H1 (cell line): ENCODE measurements at regions of chr2 and their contacts with region 1.

Region 1: DNA sequence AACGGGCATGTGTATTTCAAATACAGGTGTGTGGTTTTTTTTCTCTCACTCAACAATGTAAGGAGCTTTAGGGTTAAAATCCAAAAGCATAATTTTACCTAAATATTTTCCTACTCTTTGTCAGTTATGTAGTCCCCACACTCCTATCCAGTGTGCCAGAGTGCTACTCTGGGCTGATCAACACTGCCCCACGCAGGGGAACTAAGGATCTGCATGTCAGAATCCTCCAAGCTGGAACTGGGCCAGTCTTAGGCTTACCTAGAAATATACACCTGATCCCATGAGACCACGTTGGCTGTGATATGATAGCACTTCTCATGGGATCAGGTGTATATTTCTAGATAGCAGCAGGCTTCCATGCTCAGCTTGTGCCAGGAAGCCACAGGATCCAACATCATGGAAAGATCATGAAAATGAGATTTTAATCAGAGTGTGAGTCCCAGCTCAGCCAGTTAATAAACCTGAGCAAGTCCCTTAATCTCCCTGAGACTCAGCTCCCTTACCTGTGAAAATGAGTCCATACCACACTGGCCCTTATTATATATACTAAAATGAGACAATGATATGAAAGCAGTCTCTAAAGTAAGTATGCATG is 29.7 kb downstream of the CCDC141 start:
- DNase-seq: peak; percentile 23 to 83
- H3K4me3 ChIP-seq: no peak overlapping the region
- H3K27ac ChIP-seq: no peak overlapping the region
- H3K4me1 ChIP-seq: no peaks in the 10 kb centered on the region
- H3K27me3 ChIP-seq: no peaks in the 10 kb centered on the region
- CTCF ChIP-seq: peak; percentile 71 to 82 (median 80)
- EP300 ChIP-seq: no peak
- POLR2A ChIP-seq: no peak
- RAD21 ChIP-seq: peak; percentile 81 to 85

Region 2: DNA sequence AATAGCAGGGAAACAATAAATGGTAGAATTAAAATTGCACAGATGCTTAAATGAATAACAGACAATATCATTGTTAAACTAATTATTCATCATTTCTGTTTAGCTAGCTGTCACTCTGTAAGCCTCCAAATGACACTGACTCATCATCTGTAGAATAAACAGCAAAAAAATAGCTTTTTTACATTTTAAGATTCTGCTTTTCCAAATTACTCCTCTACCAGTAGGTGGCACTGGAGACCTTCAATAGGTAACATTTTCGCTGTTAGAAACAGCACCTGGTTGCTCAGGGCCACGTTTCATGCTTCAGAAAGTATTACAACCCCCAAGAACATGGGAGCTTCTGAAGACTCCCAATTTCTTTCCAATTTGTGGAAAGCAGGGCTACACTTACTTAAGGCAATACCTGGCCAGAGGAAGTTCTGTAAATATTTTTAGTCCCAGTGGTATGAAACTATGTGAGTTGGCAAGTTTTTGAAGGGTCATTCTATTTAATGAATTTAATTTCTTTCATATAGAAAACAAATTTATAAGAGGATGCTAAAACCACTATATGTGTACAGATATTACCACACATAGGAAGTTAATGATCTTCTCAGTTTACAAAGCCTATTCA is 258.4 kb before region 1 on chr2:
- CTCF ChIA-PET with region 1: interaction called, 11 read pairs
- POLR2A ChIA-PET with region 1: no interaction called
- DNase-seq: peak in 1 of 2 experiments; percentile 3
- H3K4me3 ChIP-seq: no peak overlapping the region
- H3K27ac ChIP-seq: no peak overlapping the region
- H3K4me1 ChIP-seq: no peaks in the 10 kb centered on the region
- H3K27me3 ChIP-seq: no peaks in the 10 kb centered on the region
- CTCF ChIP-seq: peak in 2 of 3 experiments; percentile 68 to 70; a peak in 3 of 4 replicates
- EP300 ChIP-seq: no peak
- POLR2A ChIP-seq: no peak
- RAD21 ChIP-seq: peak; percentile 88 to 89

Region 3: DNA sequence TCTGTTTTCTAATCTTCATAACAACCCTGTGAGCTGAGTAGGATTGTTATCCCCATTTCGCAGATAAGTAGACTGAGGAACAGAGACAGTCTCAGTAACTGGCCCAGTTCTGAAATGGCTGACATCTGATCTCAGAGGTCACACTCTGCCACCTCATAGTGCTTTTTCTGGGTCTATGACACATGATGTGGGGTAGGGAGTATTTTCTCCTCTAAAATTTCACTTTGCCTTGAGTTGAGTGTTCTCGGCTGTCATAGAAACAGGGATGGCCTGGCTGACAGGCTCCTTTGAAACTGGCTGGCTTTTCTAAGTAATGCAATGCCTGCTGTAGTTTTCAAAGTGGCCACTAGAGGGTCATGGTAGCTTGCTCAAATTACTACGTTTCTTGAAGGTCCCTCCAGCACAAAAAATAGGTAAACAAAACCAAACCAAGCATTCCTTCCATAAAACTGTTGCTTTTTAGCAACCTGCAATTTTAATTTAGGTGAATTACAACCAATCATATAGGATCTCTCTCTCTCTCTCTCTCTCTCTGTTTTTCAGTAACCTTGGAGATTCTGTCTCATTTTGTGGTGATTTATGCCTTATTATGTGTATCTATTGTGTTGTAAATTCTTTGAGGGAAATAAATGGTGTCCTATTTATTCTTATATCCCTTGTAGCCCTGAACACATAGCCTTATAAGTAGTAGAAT is 128.8 kb before region 1 on chr2:
- CTCF ChIA-PET with region 1: interaction called, 21 read pairs
- POLR2A ChIA-PET with region 1: no interaction called
- DNase-seq: peak; percentile 27 to 78
- H3K4me3 ChIP-seq: no peak overlapping the region
- H3K27ac ChIP-seq: no peak overlapping the region
- H3K4me1 ChIP-seq: peaks cover 0 to 3% (median 0%) of the 10 kb centered on the region in 4 experiments; a peak in 2 of 7 replicates
- H3K27me3 ChIP-seq: no peaks in the 10 kb centered on the region
- CTCF ChIP-seq: peak in 2 of 3 experiments; percentile 78 to 84; a peak in 3 of 4 replicates
- EP300 ChIP-seq: no peak
- POLR2A ChIP-seq: no peak
- RAD21 ChIP-seq: peak; percentile 68 to 76

Region 4: GRCh38 chr2:178998539-178998938 is 21.7 kb before region 1 on chr2:
- CTCF ChIA-PET with region 1: interaction called, 10 read pairs
- POLR2A ChIA-PET with region 1: no interaction called
- DNase-seq: no peak
- H3K4me3 ChIP-seq: no peak overlapping the region
- H3K27ac ChIP-seq: no peak overlapping the region
- H3K4me1 ChIP-seq: no peaks in the 10 kb centered on the region
- H3K27me3 ChIP-seq: no peaks in the 10 kb centered on the region
- CTCF ChIP-seq: no peak
- EP300 ChIP-seq: no peak
- POLR2A ChIP-seq: no peak
- RAD21 ChIP-seq: no peak

Region 5: DNA sequence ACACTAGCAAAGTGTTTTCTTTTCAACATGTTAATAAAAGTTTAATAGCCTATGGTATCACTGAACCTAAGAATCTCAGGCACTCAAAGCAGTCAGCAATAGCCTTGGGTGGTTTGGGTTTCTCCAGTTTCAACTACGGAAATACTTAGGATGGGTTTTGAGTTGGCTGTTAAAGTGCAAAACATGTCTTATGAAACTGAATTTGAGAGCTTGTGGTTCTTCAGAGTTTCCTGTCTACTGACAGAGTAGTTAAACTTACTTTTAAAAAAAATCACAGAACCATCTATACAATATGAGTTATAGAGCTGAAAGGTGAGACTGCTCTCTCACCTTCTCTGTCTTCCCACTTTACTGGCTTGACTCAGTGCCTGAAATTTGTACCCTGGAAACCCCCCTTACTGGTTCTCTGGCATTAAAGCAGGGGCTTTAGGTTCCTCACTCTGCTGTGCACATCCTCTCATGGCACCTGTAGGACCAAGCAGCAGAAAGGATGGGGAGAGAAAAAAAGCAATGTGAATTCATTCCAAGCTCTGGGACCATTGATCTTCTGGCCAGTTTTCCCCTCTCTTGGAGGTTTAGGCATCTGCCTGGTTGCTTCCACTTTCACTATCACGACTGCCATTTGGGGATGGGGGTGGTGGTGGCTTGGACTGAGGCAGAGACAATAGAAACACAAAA is 11.6 kb after region 1 on chr2:
- CTCF ChIA-PET with region 1: interaction called, 48 read pairs
- POLR2A ChIA-PET with region 1: no interaction called
- DNase-seq: no peak
- H3K4me3 ChIP-seq: no peak overlapping the region
- H3K27ac ChIP-seq: no peak overlapping the region
- H3K4me1 ChIP-seq: peaks cover 0 to 4% (median 1%) of the 10 kb centered on the region in 4 experiments; a peak in 2 of 7 replicates
- H3K27me3 ChIP-seq: no peaks in the 10 kb centered on the region
- CTCF ChIP-seq: no peak
- EP300 ChIP-seq: no peak
- POLR2A ChIP-seq: no peak
- RAD21 ChIP-seq: no peak

Region 6: DNA sequence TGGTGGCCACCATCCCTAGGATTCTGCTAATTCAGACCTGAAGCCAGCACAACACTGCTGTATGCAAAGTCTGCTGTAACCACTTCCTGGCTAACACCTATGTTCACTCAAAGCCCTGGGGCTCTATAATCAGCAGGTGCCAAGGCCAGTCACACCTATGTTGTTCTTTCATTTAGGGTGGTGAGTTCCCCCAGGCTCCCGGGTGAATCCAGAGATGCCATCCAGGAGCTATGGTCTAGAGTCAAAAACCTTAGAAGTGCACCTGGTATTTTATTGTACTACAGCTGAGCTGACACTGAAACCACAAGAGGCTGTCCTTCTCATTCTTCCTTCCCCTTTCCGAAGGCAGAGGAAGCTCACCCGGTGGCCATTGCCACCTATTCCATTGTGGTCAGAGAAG is 75.8 kb after region 1 on chr2:
- CTCF ChIA-PET with region 1: no interaction called
- POLR2A ChIA-PET with region 1: no interaction called
- DNase-seq: no peak
- H3K4me3 ChIP-seq: no peak overlapping the region
- H3K27ac ChIP-seq: no peak overlapping the region
- H3K4me1 ChIP-seq: no peaks in the 10 kb centered on the region
- H3K27me3 ChIP-seq: no peaks in the 10 kb centered on the region
- CTCF ChIP-seq: no peak
- EP300 ChIP-seq: no peak
- POLR2A ChIP-seq: no peak
- RAD21 ChIP-seq: no peak